ENCODE measurements at regions of chr1 and their contacts with region 1.

Region 1: GRCh38 chr1:3410142-3410925 is 44.1 kb upstream of the ARHGEF16 start:
- DNase-seq: peak; percentile 58 to 83 (median 70)
- H3K4me3 ChIP-seq: no peak overlapping the region
- H3K27ac ChIP-seq: no peak overlapping the region
- H3K4me1 ChIP-seq: peaks cover 2% of the 10 kb centered on the region
- H3K27me3 ChIP-seq: no peaks in the 10 kb centered on the region
- CTCF ChIP-seq: peak; percentile 27 to 65 (median 50)
- EP300 ChIP-seq: no peak
- POLR2A ChIP-seq: no peak

Region 2: DNA sequence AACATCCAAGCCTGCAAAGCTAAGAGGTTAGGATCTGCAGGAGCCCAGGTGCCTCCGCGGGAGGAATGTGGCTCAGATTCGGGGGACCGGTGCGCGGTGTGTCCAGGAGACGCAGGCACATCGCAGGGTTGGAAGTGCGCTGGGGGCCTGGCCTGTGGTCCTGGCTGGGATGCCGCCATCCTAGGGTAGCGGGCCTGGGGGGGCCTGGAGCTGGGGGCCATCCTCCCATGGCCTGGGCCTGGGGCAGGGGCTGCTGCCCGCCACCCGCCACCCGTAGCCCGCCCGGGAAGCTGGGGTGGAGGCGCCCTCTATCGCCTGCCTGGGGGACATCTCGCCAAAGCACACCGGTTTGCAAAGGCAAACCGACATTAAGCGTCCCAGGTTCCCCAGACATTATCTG is 126.5 kb before region 1 on chr1:
- intact Hi-C with region 1: loop called in 1 of 4 experiments (anchors 5 kb)
- DNase-seq: peak; percentile 56 to 77 (median 72)
- H3K4me3 ChIP-seq: no peak overlapping the region
- H3K27ac ChIP-seq: no peak overlapping the region
- H3K4me1 ChIP-seq: peaks cover 5% of the 10 kb centered on the region
- H3K27me3 ChIP-seq: no peaks in the 10 kb centered on the region
- CTCF ChIP-seq: peak; percentile 67 to 76 (median 68)
- EP300 ChIP-seq: no peak
- POLR2A ChIP-seq: no peak